ENCODE measurements at regions of chr12 and their contacts with region 1.

Region 1: DNA sequence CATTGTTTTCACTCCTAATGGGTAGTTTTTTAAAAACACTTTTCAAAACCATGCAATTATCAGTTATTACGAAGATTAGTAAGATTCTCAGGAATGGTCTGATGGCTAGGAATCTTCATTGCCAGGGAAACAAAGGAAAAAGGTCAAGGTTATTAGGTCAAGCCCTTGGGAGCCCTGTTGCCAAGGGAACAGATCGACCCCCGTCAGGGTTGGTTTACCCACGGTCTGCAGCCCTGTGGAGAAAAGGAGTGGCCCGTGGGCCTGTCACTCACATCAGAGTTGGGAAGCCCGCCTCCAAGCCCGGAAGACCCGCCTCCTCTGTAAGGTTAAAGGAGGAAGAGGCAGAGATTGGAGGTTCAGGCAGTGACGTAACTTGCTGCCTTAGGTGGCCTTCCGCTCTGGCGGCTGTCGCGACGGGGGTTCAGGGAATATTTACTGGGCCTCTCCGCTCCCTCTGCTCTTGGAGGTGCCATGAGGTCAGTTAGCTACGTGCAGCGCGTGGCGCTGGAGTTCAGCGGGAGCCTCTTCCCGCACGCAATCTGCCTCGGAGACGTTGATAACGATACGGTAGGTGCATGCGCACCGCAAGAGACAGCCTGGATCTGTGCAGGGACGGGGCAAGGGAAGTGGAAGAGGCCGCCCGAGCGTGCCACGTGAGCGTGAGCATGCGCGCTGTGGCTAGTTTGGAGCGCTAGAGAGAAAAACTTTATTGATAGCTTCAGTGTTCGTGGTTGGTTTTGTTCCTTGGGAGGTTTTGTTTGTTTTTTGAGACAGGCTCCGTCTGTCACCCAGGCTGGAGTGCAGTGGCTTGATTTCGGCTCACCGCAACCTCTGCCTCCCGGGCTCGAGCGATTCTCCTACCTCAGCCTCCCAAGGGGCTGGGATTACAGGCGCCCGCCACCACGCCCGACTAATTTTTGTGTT is at the start of gene ITFG2:
- DNase-seq: peak; percentile 97
- H3K4me3 ChIP-seq: peak within 1 kb of the TSS; percentile 62 to 99 (median 92)
- H3K27ac ChIP-seq: peak within 1 kb of the TSS; percentile 63
- H3K4me1 ChIP-seq: peaks cover 9% of the 10 kb centered on the region
- H3K27me3 ChIP-seq: no peaks in the 10 kb centered on the region
- CTCF ChIP-seq: no peak
- total RNA-seq, gene ITFG2: 15.2 to 25.9 TPM

Region 2: DNA sequence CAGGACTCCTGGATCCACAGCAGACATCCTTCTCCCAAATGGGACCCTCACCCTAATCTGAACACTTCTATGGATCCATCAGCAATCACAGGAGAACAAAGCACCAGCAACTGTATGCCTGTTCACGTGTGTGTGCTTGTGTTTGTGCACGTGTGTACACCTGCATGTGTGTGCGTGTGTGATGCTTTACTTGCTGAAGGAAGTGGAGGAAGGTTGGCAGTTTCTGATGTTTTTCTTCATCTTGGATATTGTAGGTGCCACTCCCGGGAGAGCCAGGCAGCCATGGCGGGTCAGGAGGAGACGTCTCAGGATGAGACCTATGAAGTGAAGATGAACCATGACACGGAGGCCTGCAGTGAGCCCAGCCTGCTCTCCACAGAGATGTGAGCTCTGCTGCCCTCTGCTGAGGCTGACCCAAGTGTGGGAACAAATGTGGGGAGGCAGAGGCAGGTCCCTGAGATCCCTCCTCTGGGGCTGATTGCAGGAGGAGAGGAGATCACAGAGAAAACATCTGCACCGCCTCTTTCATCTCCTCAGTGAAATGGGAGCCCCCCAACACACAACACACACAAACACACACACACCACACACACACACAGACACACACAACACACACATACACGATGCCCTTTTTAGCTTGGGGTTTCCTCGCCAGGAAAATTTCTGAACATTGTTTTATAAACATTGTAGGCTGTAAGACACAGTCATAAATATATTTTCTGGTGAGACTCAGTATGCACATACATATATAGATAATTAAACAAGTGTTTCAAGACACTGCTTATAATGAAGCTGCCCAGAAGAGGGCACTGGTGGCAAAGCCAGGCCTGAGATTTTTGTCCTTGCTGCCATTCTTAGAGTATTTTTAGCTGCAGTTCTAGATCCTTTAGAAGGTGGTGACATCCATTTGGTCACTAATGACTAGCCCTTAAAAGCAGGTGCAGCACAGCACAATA is 130.0 kb before region 1 on chr12:
- CTCF ChIA-PET with region 1: no interaction called
- dilution Hi-C with region 1: no loop called
- in situ Hi-C with region 1: no loop called
- intact Hi-C with region 1: loop called (anchors 1 kb)
- DNase-seq: peak; percentile 15
- H3K4me3 ChIP-seq: no peak overlapping the region
- H3K27ac ChIP-seq: no peak overlapping the region
- H3K4me1 ChIP-seq: no peaks in the 10 kb centered on the region
- H3K27me3 ChIP-seq: no peaks in the 10 kb centered on the region
- CTCF ChIP-seq: peak; percentile 48 to 67

Region 3: DNA sequence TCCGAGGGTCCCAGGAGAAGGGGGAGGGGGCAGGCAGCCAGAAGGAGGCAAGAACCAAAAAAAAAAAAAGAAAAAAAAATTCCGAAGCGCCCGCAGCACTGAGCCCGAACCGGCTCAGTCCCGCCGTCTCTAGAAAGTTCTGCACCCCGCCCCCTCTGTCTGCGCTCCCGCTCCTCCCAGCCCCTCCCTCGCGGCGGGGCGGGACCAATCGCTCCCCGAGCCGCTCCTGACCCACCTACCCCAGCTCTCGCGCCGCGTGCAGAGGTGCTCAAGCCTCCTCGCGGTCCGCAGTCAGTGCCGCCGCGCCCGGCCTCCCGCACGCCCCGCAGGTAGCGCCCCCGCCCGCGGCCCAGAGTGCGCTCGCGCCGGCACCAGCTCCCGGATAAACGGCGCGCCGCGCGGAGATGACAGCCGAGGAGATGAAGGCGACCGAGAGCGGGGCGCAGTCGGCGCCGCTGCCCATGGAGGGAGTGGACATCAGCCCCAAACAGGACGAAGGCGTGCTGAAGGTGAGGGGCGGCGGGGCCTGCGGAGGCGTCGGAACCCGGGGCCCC is 17.7 kb before region 1 on chr12 and contains the start of gene FKBP4:
- CTCF ChIA-PET with region 1: no interaction called
- dilution Hi-C with region 1: no loop called
- in situ Hi-C with region 1: no loop called
- intact Hi-C with region 1: loop called (anchors 1 kb)
- DNase-seq: peak; percentile 84
- H3K4me3 ChIP-seq: peak within 1 kb of the TSS; percentile 74 to 89 (median 87)
- H3K27ac ChIP-seq: peak within 1 kb of the TSS; percentile 26
- H3K4me1 ChIP-seq: peaks cover 24% of the 10 kb centered on the region
- H3K27me3 ChIP-seq: no peaks in the 10 kb centered on the region
- CTCF ChIP-seq: no peak
- total RNA-seq, gene FKBP4: 53.5 to 111 TPM

Region 4: DNA sequence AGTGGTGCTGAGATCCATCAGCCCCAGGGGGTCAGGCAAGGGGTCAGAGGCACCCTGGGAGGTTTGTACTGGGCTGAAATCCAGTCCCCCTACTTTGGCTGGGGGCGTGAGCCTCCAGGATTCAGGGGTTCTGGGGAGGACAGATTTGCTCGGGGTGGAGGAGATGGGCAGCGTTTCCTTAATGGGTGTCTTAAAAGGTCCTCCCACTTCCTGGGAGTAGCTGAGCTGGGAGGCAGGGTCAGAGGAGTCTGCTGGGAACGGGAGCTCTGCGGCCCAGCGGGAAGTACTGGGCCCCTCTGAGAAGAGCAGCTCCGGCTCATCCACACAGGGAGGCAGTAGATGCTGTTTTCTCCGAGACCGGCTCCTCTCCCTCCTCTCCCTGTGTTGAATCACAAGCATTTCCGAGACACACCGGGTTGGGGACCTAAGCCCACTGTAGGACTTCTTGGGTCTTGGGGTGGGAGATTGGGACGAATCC is 46.4 kb after region 1 on chr12:
- CTCF ChIA-PET with region 1: no interaction called
- dilution Hi-C with region 1: no loop called
- in situ Hi-C with region 1: no loop called
- intact Hi-C with region 1: no loop called
- DNase-seq: no peak
- H3K4me3 ChIP-seq: no peak overlapping the region
- H3K27ac ChIP-seq: no peak overlapping the region
- H3K4me1 ChIP-seq: no peaks in the 10 kb centered on the region
- H3K27me3 ChIP-seq: no peaks in the 10 kb centered on the region
- CTCF ChIP-seq: no peak

Measured in mammary epithelial cell (primary cell).